ENCODE measurements at regions of chr6 and their contacts with region 1.

Region 1: GRCh38 chr6:168619560-168620314 is 178.8 kb downstream of the SMOC2 start:
- DNase-seq: no peak
- ATAC-seq: no peak

Region 2: GRCh38 chr6:168563656-168564055 is 56.1 kb before region 1 on chr6:
- intact Hi-C with region 1: loop called in 1 of 2 experiments (anchors 2 kb)
- DNase-seq: no peak
- ATAC-seq: no peak

Measured in left cardiac atrium (tissue), 4 donors.